ENCODE measurements at regions of chr19 and their contacts with region 1.

Region 1: GRCh38 chr19:4791170-4792018 is at the start of gene FEM1A:
- DNase-seq: peak; percentile 99
- H3K4me3 Mint-ChIP-seq: peak within 1 kb of the TSS; percentile 80
- H3K27ac Mint-ChIP-seq: peak within 1 kb of the TSS; percentile 86
- H3K4me1 Mint-ChIP-seq: peaks cover 38% of the 10 kb centered on the region
- H3K27me3 Mint-ChIP-seq: no peaks in the 10 kb centered on the region
- total RNA-seq, gene FEM1A: 10.2 to 10.3 TPM

Region 2: GRCh38 chr19:4707956-4708650 is 83.3 kb before region 1 on chr19:
- CTCF ChIA-PET with region 1: no interaction called
- POLR2A ChIA-PET with region 1: no interaction called
- DNase-seq: no peak
- H3K4me3 Mint-ChIP-seq: no peak overlapping the region
- H3K27ac Mint-ChIP-seq: no peak overlapping the region
- H3K4me1 Mint-ChIP-seq: peaks cover 26% of the 10 kb centered on the region
- H3K27me3 Mint-ChIP-seq: no peaks in the 10 kb centered on the region

Region 3: GRCh38 chr19:4723367-4724187 is 67.8 kb before region 1 on chr19 and contains the start of gene DPP9:
- CTCF ChIA-PET with region 1: interaction called, 37 read pairs
- POLR2A ChIA-PET with region 1: interaction called, 16 read pairs
- DNase-seq: peak; percentile 98
- H3K4me3 Mint-ChIP-seq: peak within 1 kb of the TSS; percentile 97
- H3K27ac Mint-ChIP-seq: peak within 1 kb of the TSS; percentile 92
- H3K4me1 Mint-ChIP-seq: peaks cover 41% of the 10 kb centered on the region
- H3K27me3 Mint-ChIP-seq: no peaks in the 10 kb centered on the region
- total RNA-seq, gene DPP9: 67.6 to 78.3 TPM

Region 4: DNA sequence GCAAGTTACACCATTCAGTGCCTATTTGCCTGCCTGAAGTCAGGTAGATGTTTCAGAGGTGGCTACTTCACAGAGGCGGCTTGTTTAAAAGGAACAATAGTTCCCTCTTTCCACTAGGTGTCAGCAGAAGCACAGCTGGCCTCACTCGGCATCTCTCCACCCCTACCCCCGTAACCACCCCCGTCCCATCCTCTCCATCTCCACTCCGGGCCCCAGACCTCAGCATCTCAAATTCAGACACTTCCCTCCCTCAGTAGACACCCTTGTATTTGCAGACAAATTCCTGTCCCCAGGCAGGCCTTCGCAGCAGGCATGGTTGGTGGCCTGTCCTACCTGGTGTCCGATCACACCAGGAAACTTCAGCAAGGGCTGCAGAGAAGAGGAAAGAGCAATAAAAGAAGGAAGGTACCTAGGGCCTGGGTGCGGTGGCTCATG is 58.7 kb before region 1 on chr19:
- CTCF ChIA-PET with region 1: interaction called, 93 read pairs
- POLR2A ChIA-PET with region 1: interaction called, 3 read pairs
- DNase-seq: peak; percentile 58
- H3K4me3 Mint-ChIP-seq: no peak overlapping the region
- H3K27ac Mint-ChIP-seq: no peak overlapping the region
- H3K4me1 Mint-ChIP-seq: peaks cover 12% of the 10 kb centered on the region
- H3K27me3 Mint-ChIP-seq: peaks cover 7% of the 10 kb centered on the region

Region 5: GRCh38 chr19:4738734-4739133 is 52.7 kb before region 1 on chr19:
- CTCF ChIA-PET with region 1: interaction called, 93 read pairs
- POLR2A ChIA-PET with region 1: interaction called, 3 read pairs
- DNase-seq: no peak
- H3K4me3 Mint-ChIP-seq: no peak overlapping the region
- H3K27ac Mint-ChIP-seq: no peak overlapping the region
- H3K4me1 Mint-ChIP-seq: peaks cover 3% of the 10 kb centered on the region
- H3K27me3 Mint-ChIP-seq: peaks cover 12% of the 10 kb centered on the region

Region 6: DNA sequence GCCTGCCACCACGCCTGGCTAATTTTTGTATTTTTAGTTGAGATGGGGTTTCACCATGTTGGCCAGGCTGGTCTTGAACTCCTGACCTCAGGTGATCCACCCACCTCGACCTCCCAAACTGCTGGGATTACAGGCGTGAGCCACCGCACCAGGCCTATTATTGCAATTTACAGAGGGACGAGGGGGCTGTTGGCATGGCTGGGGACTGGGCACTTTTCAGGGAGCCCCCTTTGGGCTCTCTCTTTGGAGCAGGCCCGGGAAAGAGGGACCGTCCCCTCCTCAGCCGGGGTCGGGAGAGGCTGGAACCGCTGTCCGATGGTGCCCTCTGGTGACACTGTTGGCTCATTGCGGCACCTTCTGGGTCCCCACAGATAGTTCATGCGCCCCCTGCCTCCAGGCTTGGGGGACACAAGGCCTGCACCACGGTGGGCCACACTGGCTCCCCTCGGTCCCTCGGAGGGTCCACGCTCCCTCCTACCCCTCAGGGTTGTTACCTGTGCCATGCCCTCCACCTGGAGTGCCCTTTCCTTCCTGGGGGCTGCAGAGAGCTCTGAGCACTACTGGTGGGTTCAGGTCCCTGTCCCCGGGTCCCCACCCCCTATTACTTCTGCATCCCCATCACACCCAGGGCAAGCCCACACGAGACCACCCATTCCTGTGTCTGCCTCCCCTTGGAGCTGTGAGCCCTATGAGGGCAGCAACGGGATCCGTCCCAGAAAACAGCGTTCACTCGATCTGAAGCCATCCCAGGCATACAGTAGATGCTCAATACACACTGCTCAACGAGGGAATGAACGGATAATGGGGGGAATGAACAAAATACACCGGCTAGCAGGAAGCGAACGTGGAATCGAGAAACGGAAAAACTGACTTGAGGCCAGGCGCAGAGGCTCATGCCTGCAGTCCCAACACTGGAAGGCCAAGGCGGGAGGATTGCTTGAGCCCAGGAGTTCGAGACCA is 12.6 kb after region 1 on chr19:
- CTCF ChIA-PET with region 1: interaction called, 32 read pairs
- POLR2A ChIA-PET with region 1: interaction called, 8 read pairs
- DNase-seq: peak; percentile 59
- H3K4me3 Mint-ChIP-seq: no peak overlapping the region
- H3K27ac Mint-ChIP-seq: no peak overlapping the region
- H3K4me1 Mint-ChIP-seq: no peaks in the 10 kb centered on the region
- H3K27me3 Mint-ChIP-seq: no peaks in the 10 kb centered on the region

Region 7: DNA sequence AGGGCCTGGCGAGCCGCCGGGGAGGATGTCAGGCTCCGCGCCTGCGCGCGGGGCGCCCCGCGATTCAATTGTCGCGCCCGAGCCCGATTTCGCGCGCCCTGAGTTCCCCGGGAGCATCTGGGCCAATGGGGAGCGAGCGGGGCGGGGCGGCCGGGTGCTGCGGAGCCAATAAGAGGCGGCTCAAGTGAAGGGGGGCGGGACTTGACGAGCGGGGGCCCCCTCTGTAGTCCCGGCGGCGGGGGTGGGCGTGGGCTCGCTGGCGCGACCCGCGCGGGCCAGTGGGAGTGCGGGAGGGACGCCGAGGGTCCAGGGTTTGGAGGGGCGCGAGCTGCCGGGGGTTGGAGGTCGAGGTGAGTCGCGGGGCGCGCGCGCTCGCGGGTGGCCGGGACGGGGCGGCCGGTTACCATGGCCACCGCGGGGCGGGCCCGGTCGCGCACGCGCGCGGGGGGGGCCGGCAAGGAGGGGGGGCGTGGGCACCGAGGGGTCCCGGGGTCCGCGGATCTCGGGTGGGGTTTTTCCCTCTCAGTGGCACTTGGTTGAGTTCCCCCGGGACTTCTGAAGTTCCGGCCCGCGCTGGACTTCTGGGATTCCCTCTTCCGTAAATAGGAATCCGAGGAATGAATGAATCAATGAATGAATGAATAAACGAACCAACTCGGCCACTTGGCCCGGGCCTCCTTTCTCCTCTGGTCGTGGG is 118.7 kb after region 1 on chr19:
- CTCF ChIA-PET with region 1: interaction called, 13 read pairs
- POLR2A ChIA-PET with region 1: interaction called, 3 read pairs
- DNase-seq: peak; percentile 96
- H3K4me3 Mint-ChIP-seq: peak overlapping the region; percentile 83
- H3K27ac Mint-ChIP-seq: peak overlapping the region; percentile 90
- H3K4me1 Mint-ChIP-seq: peaks cover 45% of the 10 kb centered on the region
- H3K27me3 Mint-ChIP-seq: no peaks in the 10 kb centered on the region

Region 8: DNA sequence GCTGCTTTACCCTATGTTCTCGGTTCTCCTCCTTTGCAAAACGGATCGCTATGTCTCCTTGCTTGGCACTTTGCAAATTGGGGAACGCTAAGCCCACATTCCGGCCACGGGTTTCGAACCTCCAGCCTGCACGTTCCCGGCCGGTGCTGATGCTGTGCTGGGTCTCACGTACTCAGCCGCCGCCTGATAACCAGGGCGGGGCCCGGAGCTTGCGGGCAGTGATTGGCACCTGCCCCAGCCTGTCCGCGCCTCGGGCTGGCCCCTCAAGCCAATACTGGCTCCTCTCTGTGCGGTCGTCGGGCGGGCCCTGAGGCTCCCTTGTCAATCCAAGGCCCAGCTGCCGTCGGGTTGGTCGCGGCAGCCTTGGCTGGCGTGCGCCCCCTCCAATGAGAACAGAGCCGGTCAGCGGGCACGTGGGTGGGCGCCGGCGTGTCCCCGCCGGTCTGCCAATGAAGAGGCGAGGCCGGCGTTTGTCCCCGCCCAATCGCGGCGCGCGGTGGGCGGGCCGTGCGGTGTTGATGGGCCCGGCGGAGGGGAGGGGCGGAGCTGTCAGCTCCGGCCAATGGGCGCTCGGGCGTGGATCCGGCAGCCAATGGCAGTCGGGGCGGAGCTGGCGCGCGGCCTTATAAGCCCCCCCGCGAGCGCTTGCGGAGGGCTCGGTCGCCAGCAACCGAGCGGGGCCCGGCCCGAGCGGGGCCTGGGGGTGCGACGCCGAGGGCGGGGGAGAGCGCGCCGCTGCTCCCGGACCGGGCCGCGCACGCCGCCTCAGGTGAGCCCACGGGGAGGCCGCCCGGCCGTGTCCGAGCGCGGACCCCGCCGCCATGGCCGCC is 177.3 kb after region 1 on chr19 and contains the start of gene KDM4B:
- CTCF ChIA-PET with region 1: interaction called, 12 read pairs
- POLR2A ChIA-PET with region 1: interaction called, 4 read pairs
- DNase-seq: peak; percentile 99
- H3K4me3 Mint-ChIP-seq: peak within 1 kb of the TSS; percentile 86
- H3K27ac Mint-ChIP-seq: peak within 1 kb of the TSS; percentile 88
- H3K4me1 Mint-ChIP-seq: peaks cover 36% of the 10 kb centered on the region
- H3K27me3 Mint-ChIP-seq: no peaks in the 10 kb centered on the region
- total RNA-seq, gene KDM4B: 46.3 to 50.9 TPM